Activated CD4-positive, alpha-beta T cell treated with anti-CD3 and anti-CD28 coated beads for 36 hours (primary cell): ENCODE measurements at regions of chr18 and their contacts with region 1.

Region 1: DNA sequence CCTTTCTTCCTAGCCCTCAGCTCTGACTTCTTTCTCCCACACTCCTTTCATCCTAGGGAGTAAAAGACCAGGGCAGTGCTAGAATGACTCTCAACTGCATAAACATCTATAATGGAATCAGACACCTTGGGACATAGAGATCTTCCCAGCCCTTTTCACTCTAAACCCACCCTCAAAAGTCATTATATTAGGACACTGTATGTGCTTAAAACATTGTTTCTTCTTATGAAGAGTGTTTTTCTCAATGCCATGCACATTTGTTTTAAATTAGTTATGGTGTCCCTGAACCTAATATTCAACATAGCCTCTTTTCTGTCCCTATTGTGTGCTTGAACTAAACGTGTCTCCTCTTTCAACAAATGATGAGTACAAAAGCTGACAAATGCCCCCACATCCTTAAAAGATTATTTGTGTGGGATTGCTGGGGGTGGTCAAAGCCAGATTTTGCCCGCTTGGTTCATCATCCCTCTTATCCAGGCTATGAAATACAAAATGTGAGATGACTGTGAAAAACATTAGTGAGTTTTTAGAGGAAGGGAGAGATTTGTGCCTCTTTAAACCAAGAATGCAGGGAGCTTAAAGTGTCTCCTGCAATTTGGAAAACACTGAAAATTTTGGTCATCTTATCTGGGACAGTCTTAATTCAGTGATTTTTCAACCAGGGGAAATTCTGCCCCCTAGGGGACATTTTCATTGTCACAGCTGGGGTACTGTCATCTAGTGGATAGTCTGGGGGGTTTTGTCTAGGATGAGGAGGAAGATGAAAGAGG is 29.0 kb downstream of the SERPINB5 start:
- DNase-seq: peak; percentile 54
- ATAC-seq: no peak
- H3K4me3 Mint-ChIP-seq: no peak overlapping the region
- H3K27ac Mint-ChIP-seq: no peak overlapping the region
- H3K4me1 Mint-ChIP-seq: no peaks in the 10 kb centered on the region
- H3K27me3 Mint-ChIP-seq: peaks cover 28% of the 10 kb centered on the region

Region 2: DNA sequence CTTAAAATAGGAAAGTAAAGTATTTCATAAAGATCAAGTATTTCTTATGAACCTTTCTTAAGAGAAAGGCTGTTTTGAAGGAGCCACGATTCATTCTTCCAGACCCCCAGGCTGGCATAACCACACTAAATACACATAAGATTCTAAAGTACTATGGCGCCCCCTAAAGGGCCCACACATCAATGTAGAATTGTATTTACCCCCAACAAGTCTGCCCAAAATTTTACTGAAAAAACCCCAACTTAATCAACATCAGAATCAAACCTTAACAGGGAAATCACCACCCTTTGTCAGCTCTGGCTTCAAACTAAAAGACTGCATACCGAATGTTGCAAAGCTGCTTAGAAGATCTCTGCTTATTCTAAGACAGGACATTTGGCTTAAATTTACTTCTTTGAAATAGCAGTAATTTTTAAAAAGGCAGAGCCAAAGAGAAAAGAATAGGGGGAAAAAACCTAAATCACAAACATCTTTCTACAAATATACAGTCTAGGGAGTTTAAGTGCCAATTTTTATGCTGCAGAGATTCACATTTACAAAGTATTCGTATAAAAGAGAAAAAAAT is 165.7 kb before region 1 on chr18:
- CTCF ChIA-PET with region 1: interaction called, 4 read pairs
- POLR2A ChIA-PET with region 1: no interaction called
- intact Hi-C with region 1: loop called in 1 of 2 experiments (anchors 5 kb)
- DNase-seq: peak; percentile 67
- ATAC-seq: peak; percentile 58
- H3K4me3 Mint-ChIP-seq: no peak overlapping the region
- H3K27ac Mint-ChIP-seq: no peak overlapping the region
- H3K4me1 Mint-ChIP-seq: peaks cover 14% of the 10 kb centered on the region
- H3K27me3 Mint-ChIP-seq: no peaks in the 10 kb centered on the region

Region 3: DNA sequence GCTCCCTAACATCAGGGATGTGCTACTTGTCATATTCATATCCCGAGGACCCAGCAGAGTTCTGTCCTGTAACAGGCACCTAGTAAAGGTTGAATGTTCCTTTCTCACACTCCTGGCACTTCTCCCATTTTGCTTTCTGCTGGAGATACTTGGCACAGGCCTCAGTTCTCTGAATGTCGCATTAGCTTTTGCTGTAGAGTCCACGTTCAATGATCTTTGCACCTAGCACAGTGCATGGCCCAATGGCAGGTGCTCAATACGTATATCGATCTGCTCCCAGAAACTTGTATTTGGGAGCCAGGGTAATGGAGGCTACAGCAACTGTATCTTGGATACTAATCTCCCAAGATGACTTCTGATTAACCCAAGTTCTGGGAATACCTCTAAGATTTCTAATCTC is 58.7 kb before region 1 on chr18:
- CTCF ChIA-PET with region 1: no interaction called
- POLR2A ChIA-PET with region 1: no interaction called
- intact Hi-C with region 1: no loop called
- DNase-seq: no peak
- ATAC-seq: no peak
- H3K4me3 Mint-ChIP-seq: no peak overlapping the region
- H3K27ac Mint-ChIP-seq: no peak overlapping the region
- H3K4me1 Mint-ChIP-seq: no peaks in the 10 kb centered on the region
- H3K27me3 Mint-ChIP-seq: no peaks in the 10 kb centered on the region